Activated CD8-positive, alpha-beta T cell treated with anti-CD3 and anti-CD28 coated beads for 36 hours (primary cell): ENCODE measurements at regions of chr22 and their contacts with region 1.

Region 1: GRCh38 chr22:25772288-25772687 is 30.3 kb downstream of the MYO18B start:
- DNase-seq: no peak
- ATAC-seq: no peak
- H3K4me3 Mint-ChIP-seq: no peak overlapping the region
- H3K27ac Mint-ChIP-seq: peak overlapping the region; percentile 66
- H3K4me1 Mint-ChIP-seq: peaks cover 20% of the 10 kb centered on the region
- H3K27me3 Mint-ChIP-seq: peaks cover 3% of the 10 kb centered on the region
- CTCF ChIP-seq: no peak

Region 2: DNA sequence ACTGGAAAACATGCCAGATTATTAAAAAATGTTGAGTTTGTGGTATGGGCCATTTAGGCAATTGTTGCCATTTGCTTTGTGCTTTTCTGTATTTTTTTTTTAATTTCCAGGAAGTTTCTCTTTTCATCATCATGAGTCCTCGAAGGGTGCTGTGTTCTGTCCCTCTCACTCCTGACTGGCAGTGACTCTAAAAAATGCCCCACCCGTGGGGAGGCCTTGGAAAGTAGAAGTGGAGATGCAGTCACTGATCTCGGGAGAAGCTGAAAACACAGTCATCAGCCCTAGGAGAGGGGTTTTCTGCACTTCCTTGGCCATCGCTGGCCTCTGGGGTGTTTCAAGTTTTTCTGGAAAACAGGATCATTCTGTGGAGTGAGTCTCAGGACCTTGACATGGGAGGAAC is 306.3 kb before region 1 on chr22:
- CTCF ChIA-PET with region 1: interaction called, 29 read pairs
- POLR2A ChIA-PET with region 1: interaction called, 4 read pairs
- intact Hi-C with region 1: loop called (anchors 1 kb)
- DNase-seq: no peak
- ATAC-seq: no peak
- H3K4me3 Mint-ChIP-seq: no peak overlapping the region
- H3K27ac Mint-ChIP-seq: peak overlapping the region; percentile 64
- H3K4me1 Mint-ChIP-seq: no peaks in the 10 kb centered on the region
- H3K27me3 Mint-ChIP-seq: no peaks in the 10 kb centered on the region
- CTCF ChIP-seq: no peak

Region 3: DNA sequence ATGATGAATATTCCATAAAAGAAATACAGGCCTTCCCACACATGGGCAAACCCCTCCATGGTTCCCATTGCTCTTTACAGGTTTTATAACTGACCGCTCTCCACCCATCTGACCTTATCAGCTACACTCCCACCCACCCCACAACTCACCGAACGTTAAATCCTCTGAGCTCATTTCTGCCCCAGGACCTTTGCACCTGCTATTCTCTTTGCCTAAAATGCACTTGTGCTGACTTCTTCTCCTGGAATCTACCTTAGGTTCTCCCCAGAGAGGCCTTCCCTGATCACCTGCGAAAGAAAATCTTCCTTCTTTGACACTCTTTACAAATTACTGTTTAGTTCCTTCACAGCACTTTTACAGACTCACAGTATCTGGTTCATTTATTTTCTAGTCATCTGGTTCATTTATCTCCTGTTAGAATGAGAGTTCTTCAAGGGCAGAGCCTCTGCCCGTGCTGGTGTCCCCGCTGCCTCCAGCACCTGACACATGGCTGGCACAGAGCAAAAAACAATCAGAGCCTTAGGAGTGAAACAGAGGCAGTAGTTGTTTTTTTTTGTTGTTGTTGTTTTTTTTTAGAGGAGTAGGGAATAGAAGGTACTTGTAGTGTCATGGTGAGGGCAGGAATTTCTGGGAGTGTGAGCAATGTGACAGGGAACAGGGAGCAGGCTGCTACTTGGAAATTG is 229.4 kb before region 1 on chr22:
- CTCF ChIA-PET with region 1: interaction called, 22 read pairs
- POLR2A ChIA-PET with region 1: no interaction called
- intact Hi-C with region 1: no loop called
- DNase-seq: no peak
- ATAC-seq: no peak
- H3K4me3 Mint-ChIP-seq: no peak overlapping the region
- H3K27ac Mint-ChIP-seq: no peak overlapping the region
- H3K4me1 Mint-ChIP-seq: peaks cover 6% of the 10 kb centered on the region
- H3K27me3 Mint-ChIP-seq: no peaks in the 10 kb centered on the region
- CTCF ChIP-seq: no peak

Region 4: GRCh38 chr22:25702040-25702439 is 70.2 kb before region 1 on chr22:
- CTCF ChIA-PET with region 1: interaction called, 15 read pairs
- POLR2A ChIA-PET with region 1: no interaction called
- intact Hi-C with region 1: loop called (anchors 10 kb)
- DNase-seq: no peak
- ATAC-seq: no peak
- H3K4me3 Mint-ChIP-seq: no peak overlapping the region
- H3K27ac Mint-ChIP-seq: no peak overlapping the region
- H3K4me1 Mint-ChIP-seq: peaks cover 15% of the 10 kb centered on the region
- H3K27me3 Mint-ChIP-seq: no peaks in the 10 kb centered on the region
- CTCF ChIP-seq: peak; percentile 38

Region 5: DNA sequence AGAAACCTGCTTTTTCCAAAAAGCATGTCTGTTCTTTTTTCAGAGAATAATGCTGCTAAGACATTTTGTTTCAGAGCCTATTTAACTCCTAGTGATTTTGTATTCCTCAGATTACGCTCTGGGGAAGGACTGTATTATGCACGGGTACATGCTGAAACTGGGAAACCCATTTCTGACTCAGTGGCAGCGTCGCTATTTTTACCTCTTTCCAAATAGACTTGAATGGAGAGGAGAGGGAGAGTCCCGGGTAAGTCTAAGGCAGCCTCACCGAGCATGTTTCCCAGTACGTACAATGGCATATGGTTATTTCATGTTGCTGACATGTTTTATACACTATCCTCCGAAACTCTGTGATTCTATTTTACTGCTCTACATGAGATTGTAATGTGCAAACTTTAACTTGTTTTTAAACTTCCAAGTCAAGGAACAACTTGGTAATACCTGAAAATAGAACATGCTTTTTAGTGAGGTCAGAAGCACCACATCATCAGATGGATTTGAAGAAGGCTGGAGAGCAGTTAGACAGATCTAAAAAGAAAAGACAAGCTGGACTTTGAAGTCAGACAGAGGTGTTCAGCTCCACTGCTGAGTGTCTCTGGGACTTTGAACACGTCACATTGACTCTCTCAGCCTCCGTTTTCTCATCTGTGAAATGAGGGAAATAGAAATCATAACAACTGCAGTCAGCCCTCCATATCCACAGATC is 54.0 kb before region 1 on chr22:
- CTCF ChIA-PET with region 1: interaction called, 10 read pairs
- POLR2A ChIA-PET with region 1: no interaction called
- intact Hi-C with region 1: no loop called
- DNase-seq: no peak
- ATAC-seq: no peak
- H3K4me3 Mint-ChIP-seq: no peak overlapping the region
- H3K27ac Mint-ChIP-seq: no peak overlapping the region
- H3K4me1 Mint-ChIP-seq: peaks cover 2% of the 10 kb centered on the region
- H3K27me3 Mint-ChIP-seq: no peaks in the 10 kb centered on the region
- CTCF ChIP-seq: no peak

Region 6: GRCh38 chr22:25749420-25750169 is 22.7 kb before region 1 on chr22:
- CTCF ChIA-PET with region 1: interaction called, 15 read pairs
- POLR2A ChIA-PET with region 1: interaction called, 4 read pairs
- intact Hi-C with region 1: no loop called
- DNase-seq: peak; percentile 77
- ATAC-seq: peak; percentile 80
- H3K4me3 Mint-ChIP-seq: peak overlapping the region; percentile 46
- H3K27ac Mint-ChIP-seq: peak overlapping the region; percentile 94
- H3K4me1 Mint-ChIP-seq: peaks cover 47% of the 10 kb centered on the region
- H3K27me3 Mint-ChIP-seq: no peaks in the 10 kb centered on the region
- CTCF ChIP-seq: no peak

Region 7: GRCh38 chr22:25759825-25760231 is 12.5 kb before region 1 on chr22:
- CTCF ChIA-PET with region 1: interaction called, 30 read pairs
- POLR2A ChIA-PET with region 1: no interaction called
- intact Hi-C with region 1: no loop called
- DNase-seq: no peak
- ATAC-seq: no peak
- H3K4me3 Mint-ChIP-seq: no peak overlapping the region
- H3K27ac Mint-ChIP-seq: no peak overlapping the region
- H3K4me1 Mint-ChIP-seq: peaks cover 2% of the 10 kb centered on the region
- H3K27me3 Mint-ChIP-seq: no peaks in the 10 kb centered on the region
- CTCF ChIP-seq: no peak